GM13977 (cell line): ENCODE measurements at regions of chr18 and their contacts with region 1.

Region 1: GRCh38 chr18:51110073-51110803 is 80.2 kb downstream of the SMAD4 start:
- DNase-seq: peak; percentile 89
- CTCF ChIP-seq: peak; percentile 98

Region 2: GRCh38 chr18:51235011-51235789 is 125.0 kb after region 1 on chr18:
- in situ Hi-C with region 1: no loop called
- DNase-seq: peak; percentile 23
- CTCF ChIP-seq: no peak

Region 3: DNA sequence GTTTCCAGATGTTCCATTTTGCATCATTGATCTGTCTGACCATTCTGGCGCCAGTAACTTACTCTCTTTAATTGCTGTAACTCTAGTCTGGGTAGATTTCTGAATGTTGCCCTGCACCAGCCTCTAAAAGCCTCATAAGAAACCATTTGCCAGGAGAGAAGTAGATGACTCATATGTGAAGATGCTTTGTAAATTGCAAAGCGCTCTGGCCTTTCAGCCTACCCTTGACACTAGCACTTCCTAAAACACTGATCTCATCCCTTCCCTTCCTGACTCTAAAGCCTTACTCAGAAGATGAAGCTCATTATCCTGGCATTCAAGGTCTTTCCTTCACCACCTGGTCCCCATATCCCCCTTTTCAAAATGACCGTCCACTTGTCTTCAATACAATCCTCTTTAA is 280.5 kb after region 1 on chr18:
- in situ Hi-C with region 1: loop called (anchors 25 kb)
- DNase-seq: no peak
- CTCF ChIP-seq: no peak

Region 4: DNA sequence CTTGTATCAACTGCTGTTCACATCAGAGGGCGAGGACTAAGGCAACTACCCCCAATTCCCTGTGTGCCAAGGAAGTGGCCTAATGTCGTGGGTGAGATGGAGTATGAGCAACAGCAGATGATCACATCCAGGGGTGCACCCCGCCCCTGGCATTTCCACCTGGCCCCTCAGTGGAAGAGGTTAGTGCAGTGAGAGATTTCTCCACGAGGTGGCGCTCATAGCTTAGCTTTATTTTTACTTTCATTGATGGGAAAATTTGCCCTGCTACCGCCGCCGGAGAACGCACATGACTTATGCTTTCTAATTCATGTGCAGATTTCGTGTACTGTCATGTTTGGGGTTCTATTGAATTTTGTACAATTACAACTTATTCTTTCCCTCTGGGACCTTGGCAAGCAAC is 557.9 kb after region 1 on chr18:
- in situ Hi-C with region 1: loop called (anchors 25 kb)
- DNase-seq: peak; percentile 33
- CTCF ChIP-seq: peak; percentile 82

Region 5: DNA sequence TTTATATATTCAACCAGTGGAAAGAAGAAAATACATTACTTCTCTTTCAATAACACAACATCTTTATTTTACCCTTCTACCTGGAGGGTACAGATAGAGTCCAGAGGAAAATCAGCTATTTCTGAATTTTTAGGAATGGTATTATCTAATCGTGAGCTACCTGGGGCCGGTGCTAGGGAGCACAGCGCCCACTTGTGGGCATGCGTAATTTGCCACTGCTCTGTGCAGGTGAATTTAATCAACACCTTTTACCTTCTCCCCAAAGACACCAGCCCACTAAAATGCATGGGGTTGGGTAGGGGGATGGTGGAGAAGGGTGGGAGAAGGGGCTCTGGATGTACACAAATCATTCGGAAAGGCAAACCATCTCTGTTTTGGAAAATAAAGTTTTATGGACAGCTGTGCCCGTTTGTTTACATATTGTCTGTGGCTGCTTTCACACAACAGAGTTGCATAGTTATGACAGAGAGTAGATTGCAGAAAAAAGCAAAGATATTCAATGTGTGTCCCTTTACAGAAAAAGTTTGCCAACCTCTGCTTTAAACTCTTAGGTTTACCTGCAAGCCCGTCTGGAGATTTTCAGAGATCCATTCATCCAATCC is 1178.3 kb after region 1 on chr18:
- in situ Hi-C with region 1: loop called (anchors 25 kb)
- DNase-seq: peak; percentile 10
- CTCF ChIP-seq: peak; percentile 91